ENCODE measurements at regions of chr11 and their contacts with region 1.

Region 1: DNA sequence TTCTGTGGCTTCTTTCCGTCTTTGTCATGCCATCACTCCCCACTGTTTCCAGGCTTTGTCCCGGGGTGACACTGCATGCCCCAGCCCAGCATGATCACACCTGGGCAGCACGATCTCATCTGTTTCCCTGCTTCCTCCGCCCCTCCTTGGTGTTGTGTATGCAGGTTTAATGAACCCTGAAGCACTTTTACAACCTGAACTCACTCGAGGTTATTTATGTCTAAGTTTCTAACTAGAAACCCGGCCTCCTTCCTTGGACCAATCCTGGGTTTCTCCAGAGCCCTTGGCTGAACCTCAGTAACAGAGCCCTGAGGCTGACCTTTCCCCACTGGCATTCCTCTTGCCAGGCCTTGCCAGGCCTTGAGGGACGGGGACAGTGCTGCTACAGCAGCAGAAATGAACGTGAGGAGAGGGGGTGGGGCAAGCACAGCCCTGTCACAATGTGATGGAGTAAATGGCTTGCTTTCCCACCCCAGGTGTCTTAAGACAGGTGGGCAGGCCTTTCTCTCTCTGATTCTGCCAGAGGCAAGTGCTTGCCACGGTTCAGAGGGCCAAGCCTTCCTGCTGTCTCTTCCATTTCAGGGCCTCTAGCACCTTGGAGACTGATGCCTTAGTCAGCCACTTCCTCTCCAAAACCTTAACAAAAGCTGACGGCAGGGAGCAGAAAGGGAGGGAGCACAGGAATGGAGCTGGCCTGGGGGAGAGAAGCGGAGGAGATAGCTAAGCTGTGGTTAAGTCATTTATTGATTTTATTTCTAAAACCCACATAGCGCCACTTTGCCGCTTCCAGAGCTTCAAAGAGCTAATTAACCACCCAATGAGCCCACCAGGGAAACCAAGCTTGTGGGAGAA is 3.1 kb upstream of the PYGM start:
- DNase-seq: no peak

Region 2: DNA sequence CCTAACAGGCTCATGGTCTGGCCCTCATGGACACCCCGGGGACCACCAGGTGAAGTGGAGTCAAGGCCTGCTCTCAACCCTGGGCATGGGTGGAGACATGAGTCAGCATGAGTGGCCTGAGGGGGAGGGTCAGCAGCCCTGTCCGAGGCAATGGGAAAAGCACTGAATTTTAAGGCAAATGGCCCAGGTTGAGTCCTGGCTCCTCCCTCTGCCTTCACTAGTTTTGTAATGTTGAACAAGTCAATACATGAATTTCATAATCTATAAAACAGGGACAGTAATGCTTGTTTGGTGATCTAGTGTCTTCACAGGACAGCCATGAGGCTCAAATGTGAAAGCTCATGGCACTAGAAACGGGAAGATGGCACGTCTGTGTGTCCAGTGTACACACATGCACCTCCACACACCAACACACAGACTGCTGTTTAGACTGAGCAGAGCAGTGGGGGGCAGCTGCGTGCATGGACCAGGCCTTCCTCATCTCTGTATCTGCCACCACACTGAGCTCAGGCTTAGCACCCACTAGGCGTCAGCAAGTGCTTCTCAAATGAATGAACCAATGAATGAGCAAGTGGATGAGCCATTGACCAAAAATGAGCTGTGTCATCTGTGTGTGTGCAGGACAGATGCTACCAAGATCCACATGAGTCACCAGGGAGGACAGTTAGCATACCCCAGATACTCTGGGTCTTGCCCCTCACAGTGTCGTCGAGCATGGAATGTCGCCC is 103.3 kb before region 1 on chr11:
- intact Hi-C with region 1: no loop called
- DNase-seq: no peak

Region 3: DNA sequence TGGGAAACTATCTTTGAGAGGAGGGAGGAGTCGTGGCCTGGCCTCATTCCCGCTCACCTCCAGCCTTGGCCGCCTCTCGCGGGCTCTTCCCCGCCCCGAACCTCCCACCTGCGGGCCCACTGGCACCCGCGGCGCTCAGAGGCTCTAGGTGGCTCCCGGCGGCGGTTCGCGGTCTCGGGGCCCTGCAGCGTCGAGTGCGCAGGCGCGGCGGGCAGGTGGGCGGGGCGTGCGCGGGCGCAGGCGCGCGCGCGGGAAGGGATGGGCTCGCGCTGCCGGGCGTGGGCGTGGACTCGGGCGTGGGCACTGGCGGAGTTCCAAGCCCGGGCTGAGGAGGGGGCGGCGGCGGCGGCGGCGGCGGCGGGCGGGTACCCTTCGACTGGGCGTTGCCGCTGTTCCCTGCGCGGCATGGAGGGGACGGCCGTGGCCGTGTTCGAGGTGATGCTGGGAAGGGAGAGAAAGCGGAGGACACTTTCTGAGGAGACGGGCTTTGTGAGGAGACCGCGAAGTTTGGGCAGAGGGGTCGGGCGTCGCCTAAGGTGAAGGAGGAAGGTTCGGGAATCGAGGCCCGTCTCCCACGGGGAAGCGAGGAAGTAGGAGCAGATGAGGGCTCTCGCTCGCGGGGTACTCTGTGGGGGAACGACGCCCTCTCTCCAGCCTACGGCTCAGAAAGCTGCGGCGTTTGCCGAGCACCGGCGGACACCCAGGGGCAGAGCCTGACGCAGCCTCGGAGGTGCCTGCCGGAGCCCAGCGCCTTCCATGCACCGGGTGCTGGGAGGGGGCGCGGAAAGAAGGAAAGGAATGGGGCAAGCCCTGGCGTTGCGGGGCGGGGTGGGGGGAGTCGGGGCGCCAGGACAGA is 1981.8 kb after region 1 on chr11:
- intact Hi-C with region 1: loop called in 1 of 2 experiments (anchors 5 kb)
- DNase-seq: peak; percentile 96